ENCODE measurements at regions of chrX and their contacts with region 1.

Region 1: DNA sequence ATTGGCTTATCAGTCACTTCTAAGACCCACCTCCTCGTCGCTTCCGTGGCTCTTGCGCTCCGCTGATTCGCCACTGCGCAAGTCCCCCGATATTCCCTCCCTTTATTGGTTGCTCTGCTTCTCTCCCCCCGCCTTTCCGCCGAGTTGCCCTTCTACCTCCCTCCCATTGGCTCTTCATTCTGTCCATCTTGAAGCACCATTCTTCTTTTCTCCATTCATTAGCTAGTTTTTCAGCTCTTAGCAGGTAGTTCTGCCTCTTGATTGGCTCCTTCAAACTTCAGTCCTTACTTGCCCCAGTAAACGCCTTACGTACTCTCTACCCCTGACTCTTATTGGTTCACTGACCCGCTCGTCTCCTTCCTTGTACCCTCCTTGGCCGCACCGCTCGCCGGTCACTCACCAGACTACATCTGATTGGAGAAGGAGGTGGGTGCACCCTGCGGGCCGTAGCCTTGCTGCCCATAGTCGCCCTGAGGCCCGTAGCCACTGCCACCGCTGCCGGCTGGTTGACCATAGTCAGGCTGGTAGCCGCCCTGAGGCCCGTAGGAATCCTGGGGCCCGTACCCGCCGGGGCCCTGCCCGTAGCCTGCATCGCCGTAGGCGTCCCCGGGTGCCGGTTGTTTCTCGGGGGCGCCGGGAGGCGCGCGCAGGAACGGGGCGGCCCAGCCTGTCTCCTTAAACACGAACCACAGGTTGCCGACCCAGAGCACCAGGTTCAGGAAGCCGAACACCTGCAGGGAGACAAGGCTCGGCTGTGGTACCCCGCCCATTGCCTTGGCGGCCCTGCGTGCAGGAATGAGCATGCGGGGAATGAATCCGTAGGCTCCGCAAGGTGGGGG is 5.1 kb upstream of the PRICKLE3 start:
- DNase-seq: peak; percentile 92 to 96
- H3K4me3 ChIP-seq: peak overlapping the region; percentile 52
- H3K4me3 Mint-ChIP-seq: peak overlapping the region; percentile 82
- H3K27ac Mint-ChIP-seq: peak overlapping the region; percentile 80
- H3K4me1 ChIP-seq: peaks cover 4% of the 10 kb centered on the region
- H3K4me1 Mint-ChIP-seq: peaks cover 43% of the 10 kb centered on the region
- H3K27me3 ChIP-seq: no peaks in the 10 kb centered on the region
- H3K27me3 Mint-ChIP-seq: peaks cover 4% of the 10 kb centered on the region
- CTCF ChIP-seq: no peak

Region 2: DNA sequence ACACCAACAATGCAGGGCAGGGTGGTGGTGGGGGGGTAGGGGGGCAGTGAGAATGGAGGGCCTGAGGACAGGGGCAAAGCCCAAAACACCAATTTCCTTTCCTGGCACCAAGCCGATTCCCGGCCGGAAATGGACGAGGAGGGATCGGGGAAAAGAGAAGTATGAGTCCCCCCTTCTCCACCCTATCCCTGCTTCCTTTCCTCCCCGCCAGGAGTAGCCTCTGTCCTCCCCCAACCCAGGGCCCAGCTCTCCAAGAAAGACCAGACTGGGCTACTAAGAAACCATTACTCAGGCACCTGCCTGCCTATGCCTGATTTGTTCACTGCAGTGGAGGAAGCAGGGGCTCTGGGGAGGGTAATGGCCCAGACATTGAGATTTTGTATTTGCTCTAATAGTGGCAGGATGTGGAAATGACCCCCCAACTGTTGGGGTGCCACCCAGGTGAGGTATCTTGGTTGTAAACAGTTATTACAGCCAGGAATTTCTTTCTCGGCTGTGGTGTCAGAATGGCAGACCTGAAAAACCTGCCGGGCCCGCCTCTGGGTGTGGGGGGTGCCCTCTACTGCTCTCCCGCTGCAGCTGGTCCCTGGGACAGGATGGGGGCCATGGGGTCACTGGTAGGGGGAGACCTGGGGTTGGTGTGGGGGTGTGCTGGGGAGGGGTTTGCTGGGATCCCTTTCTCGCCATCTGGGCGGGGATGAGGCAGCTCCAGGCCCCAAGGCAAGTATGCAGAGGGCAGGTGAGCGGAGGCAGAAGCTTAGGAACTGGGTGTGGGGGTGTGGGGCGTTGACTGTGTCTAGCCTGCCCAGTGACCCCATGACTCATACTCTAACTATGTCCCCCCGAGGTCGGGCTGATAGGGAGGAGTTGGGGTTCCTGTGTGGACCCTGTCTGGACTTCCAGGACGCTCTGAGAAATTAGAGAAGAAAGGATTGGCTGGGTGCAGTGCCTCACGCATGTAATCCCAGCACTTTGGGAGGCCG is 131.8 kb before region 1 on chrX:
- CTCF ChIA-PET with region 1: no interaction called
- POLR2A ChIA-PET with region 1: no interaction called
- intact Hi-C with region 1: no loop called
- DNase-seq: peak; percentile 52 to 57
- H3K4me3 ChIP-seq: peak overlapping the region; percentile 54
- H3K4me3 Mint-ChIP-seq: peak overlapping the region; percentile 84
- H3K27ac Mint-ChIP-seq: peak overlapping the region; percentile 66
- H3K4me1 ChIP-seq: no peaks in the 10 kb centered on the region
- H3K4me1 Mint-ChIP-seq: peaks cover 8% of the 10 kb centered on the region
- H3K27me3 ChIP-seq: no peaks in the 10 kb centered on the region
- H3K27me3 Mint-ChIP-seq: no peaks in the 10 kb centered on the region
- CTCF ChIP-seq: no peak

Region 3: DNA sequence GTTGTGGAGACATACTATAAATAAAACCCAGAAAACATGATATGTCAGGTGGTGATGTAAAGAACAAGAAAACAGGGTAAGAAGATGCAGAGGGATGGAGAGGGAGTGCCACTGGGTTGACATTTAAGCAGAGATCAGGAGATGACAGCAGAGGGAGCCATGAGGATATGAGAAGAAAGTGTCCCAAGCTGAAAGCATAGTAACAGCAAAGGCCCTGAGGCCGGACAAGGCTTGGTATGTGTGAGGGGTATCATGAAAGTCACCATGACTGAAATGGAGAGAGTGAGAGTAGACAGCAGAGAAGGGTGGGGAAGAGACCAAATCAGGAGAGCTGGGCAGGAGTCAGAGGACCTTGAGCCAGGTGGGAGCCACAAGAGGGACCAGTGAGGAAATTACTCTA is 71.2 kb before region 1 on chrX:
- CTCF ChIA-PET with region 1: no interaction called
- POLR2A ChIA-PET with region 1: no interaction called
- intact Hi-C with region 1: loop called (anchors 5 kb)
- DNase-seq: peak in 1 of 2 experiments; percentile 6
- H3K4me3 ChIP-seq: no peak overlapping the region
- H3K4me3 Mint-ChIP-seq: no peak overlapping the region
- H3K27ac Mint-ChIP-seq: no peak overlapping the region
- H3K4me1 ChIP-seq: no peaks in the 10 kb centered on the region
- H3K4me1 Mint-ChIP-seq: peaks cover 12% of the 10 kb centered on the region
- H3K27me3 ChIP-seq: no peaks in the 10 kb centered on the region
- H3K27me3 Mint-ChIP-seq: no peaks in the 10 kb centered on the region
- CTCF ChIP-seq: no peak

Region 4: GRCh38 chrX:49155900-49156837 is 35.1 kb before region 1 on chrX:
- CTCF ChIA-PET with region 1: interaction called, 27 read pairs
- POLR2A ChIA-PET with region 1: interaction called, 8 read pairs
- intact Hi-C with region 1: no loop called
- DNase-seq: peak; percentile 89 to 91
- H3K4me3 ChIP-seq: peak overlapping the region; percentile 63
- H3K4me3 Mint-ChIP-seq: peak overlapping the region; percentile 98
- H3K27ac Mint-ChIP-seq: peak overlapping the region; percentile 93
- H3K4me1 ChIP-seq: no peaks in the 10 kb centered on the region
- H3K4me1 Mint-ChIP-seq: no peaks in the 10 kb centered on the region
- H3K27me3 ChIP-seq: no peaks in the 10 kb centered on the region
- H3K27me3 Mint-ChIP-seq: no peaks in the 10 kb centered on the region
- CTCF ChIP-seq: peak; percentile 41 to 73

Region 5: GRCh38 chrX:49230469-49231232 is 39.4 kb after region 1 on chrX:
- CTCF ChIA-PET with region 1: no interaction called
- POLR2A ChIA-PET with region 1: interaction called, 5 read pairs
- intact Hi-C with region 1: loop called (anchors 2 kb)
- DNase-seq: peak; percentile 71 to 74
- H3K4me3 ChIP-seq: peak overlapping the region; percentile 46
- H3K4me3 Mint-ChIP-seq: peak overlapping the region; percentile 68
- H3K27ac Mint-ChIP-seq: no peak overlapping the region
- H3K4me1 ChIP-seq: no peaks in the 10 kb centered on the region
- H3K4me1 Mint-ChIP-seq: no peaks in the 10 kb centered on the region
- H3K27me3 ChIP-seq: no peaks in the 10 kb centered on the region
- H3K27me3 Mint-ChIP-seq: no peaks in the 10 kb centered on the region
- CTCF ChIP-seq: peak; percentile 10 to 21

Region 6: GRCh38 chrX:49269010-49269767 is 77.9 kb after region 1 on chrX:
- CTCF ChIA-PET with region 1: interaction called, 6 read pairs
- POLR2A ChIA-PET with region 1: interaction called, 43 read pairs
- intact Hi-C with region 1: loop called (anchors 2 kb)
- DNase-seq: peak; percentile 94 to 97
- H3K4me3 ChIP-seq: peak overlapping the region; percentile 63
- H3K4me3 Mint-ChIP-seq: peak overlapping the region; percentile 96
- H3K27ac Mint-ChIP-seq: peak overlapping the region; percentile 99
- H3K4me1 ChIP-seq: peaks cover 12% of the 10 kb centered on the region; the same call in 1 of the 2 replicates
- H3K4me1 Mint-ChIP-seq: peaks cover 25% of the 10 kb centered on the region
- H3K27me3 ChIP-seq: no peaks in the 10 kb centered on the region
- H3K27me3 Mint-ChIP-seq: no peaks in the 10 kb centered on the region
- CTCF ChIP-seq: no peak

Region 7: GRCh38 chrX:49840679-49841078 is 649.4 kb after region 1 on chrX:
- CTCF ChIA-PET with region 1: no interaction called
- POLR2A ChIA-PET with region 1: no interaction called
- intact Hi-C with region 1: loop called (anchors 10 kb)
- DNase-seq: peak; percentile 80 to 88
- H3K4me3 ChIP-seq: no peak overlapping the region
- H3K4me3 Mint-ChIP-seq: no peak overlapping the region
- H3K27ac Mint-ChIP-seq: no peak overlapping the region
- H3K4me1 ChIP-seq: peaks cover 8% of the 10 kb centered on the region; the same call in 1 of the 2 replicates
- H3K4me1 Mint-ChIP-seq: no peaks in the 10 kb centered on the region
- H3K27me3 ChIP-seq: no peaks in the 10 kb centered on the region
- H3K27me3 Mint-ChIP-seq: no peaks in the 10 kb centered on the region
- CTCF ChIP-seq: peak; percentile 33 to 58